CD4-positive, alpha-beta memory T cell (primary cell): ENCODE measurements at regions of chr3 and their contacts with region 1.

Region 1: GRCh38 chr3:71652781-71653413 is 69.4 kb upstream of the FOXP1 start:
- DNase-seq: peak in 4 of 5 donors; percentile 5 to 18 (median 12)
- H3K4me3 ChIP-seq: no peak overlapping the region
- H3K4me3 Mint-ChIP-seq: no peak overlapping the region
- H3K27ac ChIP-seq: no peak overlapping the region
- H3K27ac Mint-ChIP-seq: no peak overlapping the region
- H3K4me1 ChIP-seq: no peaks in the 10 kb centered on the region
- H3K4me1 Mint-ChIP-seq: peaks cover 0 to 13% (median 4%) of the 10 kb centered on the region in 4 donors
- H3K27me3 ChIP-seq: no peaks in the 10 kb centered on the region
- H3K27me3 Mint-ChIP-seq: no peaks in the 10 kb centered on the region

Region 2: DNA sequence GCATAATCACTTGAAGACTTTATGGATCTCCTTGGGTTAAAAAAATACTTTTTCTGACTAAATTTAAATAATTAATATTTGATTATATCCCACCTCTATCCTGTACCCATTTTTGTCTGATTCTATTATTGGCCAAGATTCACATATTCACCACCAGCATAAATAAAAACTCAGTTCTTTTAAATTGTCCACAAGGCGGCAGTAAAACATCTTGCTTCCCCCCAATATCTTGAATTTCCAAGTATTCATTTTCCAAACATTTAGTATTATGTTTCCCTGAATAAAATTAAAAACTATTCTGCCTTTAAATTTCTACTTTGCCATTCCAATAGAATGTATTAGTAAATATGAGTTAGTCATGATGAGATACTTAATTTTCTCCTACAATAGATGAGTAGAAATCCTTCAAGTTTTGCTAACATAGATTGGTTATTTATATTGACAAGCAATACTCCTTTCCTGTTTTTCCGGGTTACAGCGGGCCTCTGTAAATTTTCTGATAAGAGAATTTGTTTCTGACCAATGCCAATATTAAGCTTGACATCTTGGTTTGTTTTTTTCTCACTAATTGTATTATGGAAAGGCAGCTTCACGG is 1121.7 kb before region 1 on chr3:
- CTCF ChIA-PET with region 1: no interaction called
- POLR2A ChIA-PET with region 1: no interaction called
- intact Hi-C with region 1: loop called (anchors 2 kb)
- DNase-seq: peak in 2 of 5 donors; percentile 3 to 8
- H3K4me3 ChIP-seq: no peak overlapping the region
- H3K4me3 Mint-ChIP-seq: no peak overlapping the region
- H3K27ac ChIP-seq: no peak overlapping the region
- H3K27ac Mint-ChIP-seq: no peak overlapping the region
- H3K4me1 ChIP-seq: no peaks in the 10 kb centered on the region
- H3K4me1 Mint-ChIP-seq: no peaks in the 10 kb centered on the region
- H3K27me3 ChIP-seq: no peaks in the 10 kb centered on the region
- H3K27me3 Mint-ChIP-seq: peaks cover 9 to 12% of the 10 kb centered on the region in 2 donors

Region 3: GRCh38 chr3:71512000-71512399 is 140.9 kb before region 1 on chr3:
- CTCF ChIA-PET with region 1: no interaction called
- POLR2A ChIA-PET with region 1: no interaction called
- intact Hi-C with region 1: no loop called
- DNase-seq: peak; percentile 63 to 67 (median 65)
- H3K4me3 ChIP-seq: no peak overlapping the region
- H3K4me3 Mint-ChIP-seq: peak overlapping the region in 1 of 8 donors; percentile 35
- H3K27ac ChIP-seq: no peak overlapping the region
- H3K27ac Mint-ChIP-seq: peak overlapping the region; percentile 67 to 92 (median 85)
- H3K4me1 ChIP-seq: peaks cover 27% of the 10 kb centered on the region
- H3K4me1 Mint-ChIP-seq: peaks cover 7 to 17% (median 14%) of the 10 kb centered on the region in 4 donors
- H3K27me3 ChIP-seq: no peaks in the 10 kb centered on the region
- H3K27me3 Mint-ChIP-seq: no peaks in the 10 kb centered on the region

Region 4: DNA sequence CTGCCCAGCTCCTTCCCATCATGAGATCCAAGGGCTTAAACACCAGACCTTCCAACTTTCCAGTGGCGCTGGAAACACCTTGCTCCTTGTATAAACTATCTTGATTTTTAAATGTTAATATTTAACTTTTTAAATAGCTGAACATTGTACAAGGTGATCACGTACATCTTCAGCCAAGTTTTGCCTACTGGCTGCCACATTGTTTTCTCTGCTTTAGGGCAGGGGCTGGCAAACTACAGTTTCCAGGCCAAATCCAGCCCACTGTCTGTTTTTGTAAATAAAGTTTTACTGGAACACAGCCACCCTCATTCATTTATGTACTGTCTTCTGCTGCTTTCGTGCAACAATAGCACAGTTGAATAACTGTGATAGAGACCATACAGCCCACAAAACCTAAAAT is 41.8 kb before region 1 on chr3:
- CTCF ChIA-PET with region 1: no interaction called
- POLR2A ChIA-PET with region 1: no interaction called
- intact Hi-C with region 1: no loop called
- DNase-seq: no peak
- H3K4me3 ChIP-seq: no peak overlapping the region
- H3K4me3 Mint-ChIP-seq: no peak overlapping the region
- H3K27ac ChIP-seq: no peak overlapping the region
- H3K27ac Mint-ChIP-seq: no peak overlapping the region
- H3K4me1 ChIP-seq: no peaks in the 10 kb centered on the region
- H3K4me1 Mint-ChIP-seq: peaks cover 0 to 1% (median 0%) of the 10 kb centered on the region in 4 donors
- H3K27me3 ChIP-seq: no peaks in the 10 kb centered on the region
- H3K27me3 Mint-ChIP-seq: no peaks in the 10 kb centered on the region

Region 5: GRCh38 chr3:71641674-71642073 is 11.2 kb before region 1 on chr3:
- CTCF ChIA-PET with region 1: no interaction called
- POLR2A ChIA-PET with region 1: no interaction called
- intact Hi-C with region 1: no loop called
- DNase-seq: no peak
- H3K4me3 ChIP-seq: no peak overlapping the region
- H3K4me3 Mint-ChIP-seq: no peak overlapping the region
- H3K27ac ChIP-seq: no peak overlapping the region
- H3K27ac Mint-ChIP-seq: no peak overlapping the region
- H3K4me1 ChIP-seq: no peaks in the 10 kb centered on the region
- H3K4me1 Mint-ChIP-seq: no peaks in the 10 kb centered on the region
- H3K27me3 ChIP-seq: no peaks in the 10 kb centered on the region
- H3K27me3 Mint-ChIP-seq: no peaks in the 10 kb centered on the region

Region 6: DNA sequence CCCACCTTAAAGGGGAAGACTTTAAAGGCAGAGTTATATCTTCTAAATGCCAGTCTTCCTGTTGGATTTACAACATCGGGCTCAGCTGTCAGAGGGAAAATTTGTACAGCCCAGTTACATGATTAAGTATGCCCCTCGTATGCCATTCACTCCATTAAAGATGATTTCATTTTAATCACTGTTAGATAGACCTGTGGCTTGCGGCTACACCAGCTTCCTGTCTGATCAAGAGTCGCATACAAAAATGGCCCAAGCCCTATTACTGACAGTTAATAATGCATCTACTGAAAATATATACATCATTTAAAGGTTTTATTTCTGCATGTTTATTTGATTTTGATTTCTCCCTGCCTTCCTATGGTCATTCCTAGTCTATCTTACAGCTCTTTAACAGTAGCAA is 65.2 kb after region 1 on chr3:
- CTCF ChIA-PET with region 1: no interaction called
- POLR2A ChIA-PET with region 1: no interaction called
- intact Hi-C with region 1: no loop called
- DNase-seq: peak in 3 of 5 donors; percentile 31 to 67 (median 51)
- H3K4me3 ChIP-seq: no peak overlapping the region
- H3K4me3 Mint-ChIP-seq: peak overlapping the region; percentile 14 to 75 (median 52)
- H3K27ac ChIP-seq: no peak overlapping the region
- H3K27ac Mint-ChIP-seq: peak overlapping the region; percentile 11 to 95 (median 81)
- H3K4me1 ChIP-seq: peaks cover 99% of the 10 kb centered on the region
- H3K4me1 Mint-ChIP-seq: peaks cover 81 to 96% (median 86%) of the 10 kb centered on the region in 4 donors
- H3K27me3 ChIP-seq: no peaks in the 10 kb centered on the region
- H3K27me3 Mint-ChIP-seq: no peaks in the 10 kb centered on the region